Mucosa of descending colon (tissue), 3 donors: ENCODE measurements at regions of chr4 and their contacts with region 1.

Region 1: DNA sequence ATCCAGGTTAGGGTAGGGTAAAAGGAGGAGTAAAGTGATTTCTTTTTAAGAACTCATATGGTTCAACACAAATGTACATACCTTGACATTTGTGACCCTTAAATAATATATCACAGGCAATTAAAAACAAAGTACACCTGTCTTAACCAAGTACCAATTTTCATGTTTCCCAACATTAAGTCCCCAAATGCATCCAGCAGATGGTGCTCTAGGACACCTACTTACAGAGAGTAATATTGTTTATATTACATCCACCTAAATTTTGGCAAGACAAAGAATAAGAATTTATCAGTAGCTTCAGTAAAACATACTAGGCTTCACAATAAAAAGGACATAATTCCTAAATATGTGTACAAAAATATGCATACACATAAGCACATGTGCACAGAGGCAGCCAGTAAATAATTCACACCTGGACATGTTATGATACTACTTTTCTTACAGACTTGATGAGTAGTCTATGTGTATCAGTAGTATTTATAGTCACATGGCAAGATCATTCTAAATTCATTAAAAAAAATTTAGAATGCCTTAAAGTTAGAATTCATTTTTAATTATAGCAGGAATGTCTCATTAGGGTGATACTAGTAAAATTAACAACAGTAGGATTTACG is 219.7 kb downstream of the DCLK2 start:
- DNase-seq: peak in 1 of 3 donors; percentile 79
- ATAC-seq: peak; percentile 33
- H3K4me3 ChIP-seq: no peak overlapping the region
- H3K4me1 ChIP-seq: no peaks in the 10 kb centered on the region
- CTCF ChIP-seq: no peak

Region 2: DNA sequence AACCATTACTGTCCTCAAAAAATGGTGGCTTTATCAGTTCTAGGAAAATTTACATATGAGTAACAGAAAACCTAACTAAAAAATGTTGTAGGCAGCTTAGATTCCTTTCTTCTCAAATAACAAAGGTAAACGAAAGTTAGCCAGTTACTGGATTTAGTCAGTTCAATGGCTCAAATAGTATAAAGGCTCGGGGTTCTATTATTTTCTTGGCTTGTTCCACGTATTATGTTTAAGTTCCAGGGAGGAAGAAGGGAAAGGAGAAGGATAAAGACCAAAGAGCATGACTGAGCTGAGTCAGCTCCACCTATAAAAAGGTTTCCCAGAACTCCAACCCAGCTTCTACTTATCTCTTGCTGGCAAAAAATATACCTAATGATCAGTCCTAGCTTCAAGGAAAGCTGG is 243.0 kb after region 1 on chr4:
- intact Hi-C with region 1: no loop called
- DNase-seq: no peak
- ATAC-seq: no peak
- H3K4me3 ChIP-seq: no peak overlapping the region
- H3K4me1 ChIP-seq: no peaks in the 10 kb centered on the region
- CTCF ChIP-seq: no peak

Region 3: DNA sequence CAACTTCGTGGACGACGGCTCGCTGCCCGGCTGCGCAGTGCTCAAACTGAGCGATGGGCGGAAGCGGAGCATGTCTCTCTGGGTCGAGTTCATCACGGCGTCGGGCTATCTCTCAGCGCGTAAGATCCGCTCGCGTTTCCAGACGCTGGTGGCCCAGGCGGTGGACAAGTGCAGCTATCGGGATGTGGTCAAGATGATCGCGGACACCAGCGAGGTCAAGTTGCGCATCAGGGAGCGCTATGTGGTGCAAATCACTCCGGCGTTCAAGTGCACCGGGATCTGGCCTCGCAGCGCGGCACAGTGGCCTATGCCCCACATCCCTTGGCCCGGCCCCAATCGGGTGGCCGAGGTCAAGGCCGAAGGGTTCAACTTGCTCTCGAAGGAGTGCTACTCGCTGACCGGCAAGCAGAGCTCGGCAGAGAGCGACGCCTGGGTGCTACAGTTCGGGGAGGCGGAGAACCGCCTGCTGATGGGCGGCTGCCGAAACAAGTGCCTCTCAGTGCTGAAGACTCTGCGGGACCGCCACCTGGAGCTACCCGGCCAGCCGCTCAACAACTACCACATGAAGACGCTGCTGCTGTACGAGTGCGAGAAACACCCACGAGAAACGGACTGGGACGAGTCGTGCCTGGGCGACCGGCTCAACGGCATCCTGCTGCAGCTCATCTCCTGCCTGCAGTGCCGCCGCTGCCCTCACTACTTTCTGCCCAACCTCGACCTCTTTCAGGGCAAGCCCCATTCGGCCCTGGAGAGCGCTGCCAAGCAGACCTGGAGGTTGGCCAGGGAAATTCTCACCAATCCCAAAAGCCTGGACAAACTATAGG is 285.5 kb after region 1 on chr4:
- intact Hi-C with region 1: loop called in 1 of 2 experiments (anchors 5 kb)
- DNase-seq: peak in 2 of 3 donors; percentile 44 to 53
- ATAC-seq: peak; percentile 17
- H3K4me3 ChIP-seq: peak overlapping the region; percentile 13
- H3K4me1 ChIP-seq: no peaks in the 10 kb centered on the region
- CTCF ChIP-seq: no peak

Region 4: GRCh38 chr4:150867148-150867547 is 569.2 kb after region 1 on chr4:
- intact Hi-C with region 1: loop called (anchors 5 to 10 kb)
- DNase-seq: peak in 1 of 3 donors; percentile 82
- ATAC-seq: peak; percentile 89
- H3K4me3 ChIP-seq: no peak overlapping the region
- H3K4me1 ChIP-seq: no peaks in the 10 kb centered on the region
- CTCF ChIP-seq: no peak